ENCODE measurements at regions of chr4 and their contacts with region 1.

Region 1: GRCh38 chr4:37452952-37453280 is 208.4 kb downstream of the NWD2 start:
- DNase-seq: peak; percentile 68
- ATAC-seq: peak; percentile 70
- H3K4me3 Mint-ChIP-seq: peak overlapping the region; percentile 53
- H3K27ac Mint-ChIP-seq: no peak overlapping the region
- H3K4me1 Mint-ChIP-seq: peaks cover 15% of the 10 kb centered on the region
- H3K27me3 Mint-ChIP-seq: peaks cover 53% of the 10 kb centered on the region

Region 2: GRCh38 chr4:37324546-37324945 is 128.4 kb before region 1 on chr4:
- CTCF ChIA-PET with region 1: no interaction called
- POLR2A ChIA-PET with region 1: no interaction called
- intact Hi-C with region 1: no loop called
- DNase-seq: no peak
- ATAC-seq: no peak
- H3K4me3 Mint-ChIP-seq: no peak overlapping the region
- H3K27ac Mint-ChIP-seq: no peak overlapping the region
- H3K4me1 Mint-ChIP-seq: no peaks in the 10 kb centered on the region
- H3K27me3 Mint-ChIP-seq: peaks cover 12% of the 10 kb centered on the region

Region 3: GRCh38 chr4:37561803-37562207 is 108.9 kb after region 1 on chr4:
- CTCF ChIA-PET with region 1: interaction called, 39 read pairs
- POLR2A ChIA-PET with region 1: no interaction called
- intact Hi-C with region 1: loop called (anchors 1 kb)
- DNase-seq: no peak
- ATAC-seq: no peak
- H3K4me3 Mint-ChIP-seq: no peak overlapping the region
- H3K27ac Mint-ChIP-seq: no peak overlapping the region
- H3K4me1 Mint-ChIP-seq: no peaks in the 10 kb centered on the region
- H3K27me3 Mint-ChIP-seq: no peaks in the 10 kb centered on the region

Region 4: DNA sequence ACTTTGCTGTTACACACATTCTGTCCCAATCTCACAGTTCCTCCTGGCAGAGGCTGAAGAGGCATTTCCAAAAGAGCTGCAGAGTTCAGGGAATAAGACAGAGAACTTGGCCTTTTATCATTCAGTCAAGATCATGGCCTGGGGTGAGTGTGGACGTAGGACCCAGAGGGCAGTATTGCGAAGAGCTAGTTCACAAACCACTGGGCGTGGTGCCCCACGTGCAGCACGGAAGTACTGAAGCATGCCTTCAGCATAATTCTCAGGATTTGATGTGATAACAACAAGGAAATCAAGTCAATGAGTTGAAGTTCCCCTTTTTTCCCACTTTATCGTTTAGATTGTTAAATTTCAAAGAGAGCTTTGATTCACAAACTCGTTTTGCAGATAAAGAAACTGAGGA is 115.6 kb after region 1 on chr4:
- CTCF ChIA-PET with region 1: interaction called, 39 read pairs
- POLR2A ChIA-PET with region 1: no interaction called
- intact Hi-C with region 1: loop called (anchors 1 kb)
- DNase-seq: no peak
- ATAC-seq: no peak
- H3K4me3 Mint-ChIP-seq: no peak overlapping the region
- H3K27ac Mint-ChIP-seq: no peak overlapping the region
- H3K4me1 Mint-ChIP-seq: no peaks in the 10 kb centered on the region
- H3K27me3 Mint-ChIP-seq: no peaks in the 10 kb centered on the region

Region 5: GRCh38 chr4:37793562-37793961 is 340.6 kb after region 1 on chr4:
- CTCF ChIA-PET with region 1: interaction called, 4 read pairs
- POLR2A ChIA-PET with region 1: no interaction called
- intact Hi-C with region 1: loop called in 1 of 2 experiments (anchors 2 kb)
- DNase-seq: peak; percentile 23
- ATAC-seq: peak; percentile 64
- H3K4me3 Mint-ChIP-seq: no peak overlapping the region
- H3K27ac Mint-ChIP-seq: no peak overlapping the region
- H3K4me1 Mint-ChIP-seq: peaks cover under 1% of the 10 kb centered on the region
- H3K27me3 Mint-ChIP-seq: no peaks in the 10 kb centered on the region

Region 6: GRCh38 chr4:38034986-38035882 is 582.3 kb after region 1 on chr4:
- CTCF ChIA-PET with region 1: no interaction called
- POLR2A ChIA-PET with region 1: no interaction called
- intact Hi-C with region 1: loop called in 1 of 2 experiments (anchors 1 kb)
- DNase-seq: peak; percentile 42
- ATAC-seq: no peak
- H3K4me3 Mint-ChIP-seq: no peak overlapping the region
- H3K27ac Mint-ChIP-seq: no peak overlapping the region
- H3K4me1 Mint-ChIP-seq: no peaks in the 10 kb centered on the region
- H3K27me3 Mint-ChIP-seq: no peaks in the 10 kb centered on the region

Measured in activated CD4-positive, alpha-beta T cell treated with anti-CD3 and anti-CD28 coated beads for 36 hours (primary cell).